ENCODE measurements at regions of chr22 and their contacts with region 1.

Region 1: DNA sequence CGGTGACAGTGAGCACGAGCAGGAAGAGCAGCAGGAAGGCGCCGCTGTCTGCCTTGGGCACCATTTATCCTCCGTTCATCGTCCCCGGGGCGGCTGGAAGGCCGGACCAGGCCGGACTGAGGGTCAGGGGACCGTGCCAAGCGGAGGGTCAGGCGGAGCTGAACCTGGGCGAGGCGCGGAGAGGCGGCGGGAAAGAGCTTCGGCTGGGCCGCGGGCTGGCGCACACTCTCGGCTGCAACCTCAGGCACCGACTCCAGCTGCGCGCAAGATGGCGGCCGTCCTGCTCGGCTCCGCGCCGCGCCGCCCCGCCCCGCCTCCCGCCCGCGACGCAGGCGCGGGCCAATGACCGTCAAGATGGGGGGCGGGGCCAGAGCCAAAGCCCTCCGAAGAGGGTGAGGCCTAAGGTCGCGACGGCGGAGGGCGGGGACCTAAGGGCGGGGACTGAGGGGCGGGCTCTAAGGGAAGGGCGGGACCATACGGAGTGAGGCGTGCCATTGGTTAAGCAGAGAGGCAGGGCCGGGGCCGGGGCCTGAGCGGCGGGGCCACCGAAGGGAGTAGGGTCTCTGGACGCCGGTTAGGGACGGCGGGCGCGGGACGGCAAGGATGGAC is at the start of gene DGCR2:
- DNase-seq: peak; percentile 88 to 98 (median 96)
- ATAC-seq: peak; percentile 93 to 96
- H3K4me3 Mint-ChIP-seq: peak within 1 kb of the TSS; percentile 86 to 94 (median 90)
- H3K27ac Mint-ChIP-seq: peak within 1 kb of the TSS; percentile 83 to 94 (median 91)
- H3K4me1 Mint-ChIP-seq: peaks cover 25 to 54% (median 51%) of the 10 kb centered on the region in 4 donors
- H3K27me3 Mint-ChIP-seq: no peaks in the 10 kb centered on the region
- polyA plus RNA-seq, gene DGCR2: 29.5 to 61.8 (median 37.8) TPM

Region 2: DNA sequence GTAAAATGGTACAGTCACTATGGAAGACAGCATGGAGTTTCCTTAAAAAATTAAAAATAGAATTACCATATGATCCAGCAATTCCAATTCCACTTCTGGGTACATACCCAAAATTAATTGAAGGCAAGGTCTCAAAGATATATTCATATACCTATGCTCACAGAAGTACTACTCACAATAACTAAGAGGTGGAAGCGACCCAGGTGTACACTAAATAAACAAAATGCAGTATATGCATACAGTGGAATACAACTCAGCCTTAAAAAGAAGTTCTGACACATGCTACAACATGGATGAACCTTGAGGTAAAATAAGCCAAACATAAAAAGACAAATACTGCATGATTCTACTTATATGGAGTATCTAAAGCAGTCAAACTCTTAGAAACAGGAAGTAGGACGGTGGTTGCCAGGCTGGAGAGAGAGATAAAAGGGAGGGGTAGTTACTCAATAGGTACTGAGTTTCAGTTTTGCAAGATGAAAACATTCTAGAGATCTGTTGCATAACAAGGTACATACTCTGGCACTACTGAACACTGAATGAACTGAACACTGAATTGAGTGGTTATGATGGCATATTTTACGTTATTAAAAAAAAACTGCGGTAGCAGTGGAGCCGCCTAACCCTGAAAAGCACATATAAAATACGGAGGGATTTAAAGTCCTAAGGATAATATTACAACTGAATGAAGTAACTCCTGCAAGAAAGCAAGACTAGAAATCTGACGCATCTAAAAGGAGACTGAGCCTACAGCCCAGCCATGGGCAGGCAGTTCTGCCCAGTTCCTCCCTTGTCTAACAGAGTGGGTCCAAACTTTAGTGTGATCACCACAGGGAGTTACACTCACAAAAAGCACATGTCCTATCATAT is 12.8 kb before region 1 on chr22:
- POLR2A ChIA-PET with region 1: interaction called, 112 read pairs
- DNase-seq: peak; percentile 24 to 86 (median 64)
- ATAC-seq: peak; percentile 87 to 89
- H3K4me3 Mint-ChIP-seq: peak overlapping the region; percentile 63 to 88 (median 84)
- H3K27ac Mint-ChIP-seq: peak overlapping the region; percentile 93 to 99 (median 97)
- H3K4me1 Mint-ChIP-seq: peaks cover 47 to 81% (median 73%) of the 10 kb centered on the region in 4 donors
- H3K27me3 Mint-ChIP-seq: no peaks in the 10 kb centered on the region

Region 3: GRCh38 chr22:19178656-19179496 is 56.6 kb after region 1 on chr22 and contains the start of gene SLC25A1:
- POLR2A ChIA-PET with region 1: interaction called, 14 read pairs
- DNase-seq: peak in 9 of 10 donors; percentile 42 to 82 (median 62)
- ATAC-seq: peak; percentile 64 to 77
- H3K4me3 Mint-ChIP-seq: peak within 1 kb of the TSS; percentile 73 to 92 (median 86)
- H3K27ac Mint-ChIP-seq: peak within 1 kb of the TSS in 9 of 10 donors; percentile 44 to 88 (median 83)
- H3K4me1 Mint-ChIP-seq: peaks cover 6 to 32% (median 28%) of the 10 kb centered on the region in 4 donors
- H3K27me3 Mint-ChIP-seq: no peaks in the 10 kb centered on the region
- polyA plus RNA-seq, gene SLC25A1: 34.7 to 57.5 (median 41.7) TPM